Ascending aorta (tissue), 2 donors: ENCODE measurements at regions of chr4 and their contacts with region 1.

Region 1: DNA sequence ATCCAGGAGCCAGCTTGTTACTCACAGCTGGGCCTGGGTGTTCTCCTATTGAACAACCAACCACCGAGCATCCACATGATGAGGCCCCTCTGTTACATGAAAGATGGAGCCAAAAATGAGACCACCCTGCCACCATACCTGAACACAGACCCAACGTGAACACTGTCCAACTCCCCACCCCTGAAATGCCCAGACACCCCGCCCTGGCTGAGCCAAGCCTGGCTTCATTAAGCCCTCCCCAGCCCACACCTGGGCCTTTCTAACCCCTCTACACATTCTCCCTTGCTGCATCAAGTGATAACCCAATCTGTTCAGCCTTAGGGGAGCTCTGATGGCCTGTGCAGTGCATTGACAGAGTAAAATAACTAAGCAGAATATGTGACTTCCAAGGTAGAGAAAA is 80.7 kb downstream of the EVC start:
- DNase-seq: peak in 1 of 2 donors; percentile 19
- H3K4me3 ChIP-seq: no peak overlapping the region
- H3K27ac ChIP-seq: no peak overlapping the region
- H3K4me1 ChIP-seq: no peaks in the 10 kb centered on the region
- H3K27me3 ChIP-seq: no peaks in the 10 kb centered on the region
- CTCF ChIP-seq: no peak

Region 2: GRCh38 chr4:5416637-5417036 is 375.0 kb before region 1 on chr4:
- intact Hi-C with region 1: no loop called
- DNase-seq: no peak
- H3K4me3 ChIP-seq: no peak overlapping the region
- H3K27ac ChIP-seq: no peak overlapping the region
- H3K4me1 ChIP-seq: no peaks in the 10 kb centered on the region
- H3K27me3 ChIP-seq: no peaks in the 10 kb centered on the region
- CTCF ChIP-seq: no peak

Region 3: DNA sequence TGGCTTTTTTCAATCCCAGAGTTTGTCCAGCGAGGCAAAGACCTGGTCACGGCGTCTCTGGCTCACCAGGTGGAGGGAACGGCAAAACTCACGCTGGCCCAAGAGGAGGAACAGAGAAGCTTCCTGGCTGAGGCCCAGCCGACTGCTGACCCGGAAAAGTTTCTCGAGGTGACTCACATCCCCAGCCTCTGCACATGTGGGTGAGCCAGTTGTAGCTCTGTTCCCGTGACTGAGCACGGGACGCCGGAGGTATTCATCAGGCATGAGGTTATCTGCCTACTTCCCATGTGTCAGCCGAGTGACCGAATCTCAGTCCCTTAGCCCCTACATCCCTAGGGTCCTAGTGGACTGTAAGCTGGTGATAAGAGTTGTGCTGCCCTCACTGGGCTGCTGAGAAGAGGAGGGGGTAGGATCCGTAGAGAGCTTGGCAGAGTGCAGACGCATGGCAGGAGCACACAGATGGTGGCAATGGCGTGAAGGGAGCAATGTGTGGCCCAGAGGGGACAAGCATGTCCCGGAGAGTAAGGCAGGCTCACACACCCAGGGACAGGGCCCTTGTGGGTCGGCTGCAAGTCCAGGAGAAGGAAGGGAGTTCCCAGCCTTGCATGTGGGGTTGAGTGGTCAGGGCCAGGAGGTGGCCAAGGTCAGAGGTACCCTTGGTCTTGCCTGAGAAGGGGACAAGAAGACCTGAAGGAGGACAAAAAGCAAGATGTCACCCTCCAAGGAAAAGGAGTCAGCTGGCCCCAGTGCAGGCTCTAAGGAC is 37.7 kb before region 1 on chr4:
- intact Hi-C with region 1: loop called (anchors 2 kb)
- DNase-seq: peak in 1 of 2 donors; percentile 63
- H3K4me3 ChIP-seq: no peak overlapping the region
- H3K27ac ChIP-seq: peak overlapping the region in 1 of 2 donors; percentile 26
- H3K4me1 ChIP-seq: no peaks in the 10 kb centered on the region
- H3K27me3 ChIP-seq: no peaks in the 10 kb centered on the region
- CTCF ChIP-seq: no peak